ENCODE measurements at regions of chr16 and their contacts with region 1.

Region 1: GRCh38 chr16:31094424-31095120 is at the start of gene VKORC1:
- DNase-seq: peak; percentile 87 to 92 (median 90)
- H3K4me3 ChIP-seq: peak within 1 kb of the TSS; percentile 63 to 98
- H3K4me3 Mint-ChIP-seq: peak within 1 kb of the TSS; percentile 88 to 96 (median 92)
- H3K27ac ChIP-seq: peak within 1 kb of the TSS; percentile 74
- H3K27ac Mint-ChIP-seq: peak within 1 kb of the TSS; percentile 76 to 99 (median 95)
- H3K4me1 ChIP-seq: peaks cover 22% of the 10 kb centered on the region
- H3K4me1 Mint-ChIP-seq: peaks cover 12 to 42% (median 30%) of the 10 kb centered on the region in 4 donors
- H3K27me3 ChIP-seq: no peaks in the 10 kb centered on the region
- H3K27me3 Mint-ChIP-seq: no peaks in the 10 kb centered on the region
- total RNA-seq, gene VKORC1: 48.9 to 51.3 TPM

Region 2: DNA sequence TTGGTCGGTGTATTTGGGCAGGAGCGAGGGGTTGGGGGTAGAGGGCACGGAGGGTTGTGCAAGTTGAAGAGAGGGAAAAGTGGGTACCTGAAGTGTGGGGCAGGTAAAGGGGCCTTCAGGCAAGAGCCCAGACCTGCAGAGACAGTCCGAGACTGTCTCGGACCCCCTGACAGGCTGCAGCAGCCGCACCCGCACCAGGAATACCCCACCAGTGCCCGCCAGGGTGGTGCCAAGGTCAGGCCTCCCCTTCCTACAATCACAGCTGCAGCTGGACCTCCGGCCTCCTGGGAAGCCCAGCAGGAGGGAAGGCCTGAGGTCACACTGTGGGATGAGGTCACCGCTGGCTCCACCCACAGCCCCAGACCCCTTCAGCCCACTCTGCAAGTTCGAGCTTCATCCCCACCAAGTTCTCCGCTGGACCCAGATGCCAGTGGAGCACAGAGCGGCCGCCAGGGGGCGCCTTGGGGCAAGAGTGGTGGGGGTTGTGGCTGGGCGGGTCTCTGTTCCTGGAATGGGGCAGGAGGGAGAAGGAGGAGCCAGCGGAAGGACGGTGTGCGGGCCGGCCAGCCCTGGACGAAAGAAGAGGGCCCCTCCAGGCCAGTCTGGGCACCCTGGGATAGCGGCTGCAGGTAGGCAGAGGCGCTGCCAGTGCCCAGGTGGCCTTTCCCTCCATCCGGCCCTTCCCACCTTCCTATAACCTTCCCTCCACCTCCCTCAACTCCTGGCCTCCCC is 109.7 kb before region 1 on chr16 and contains the start of gene HSD3B7:
- CTCF ChIA-PET with region 1: interaction called, 4 read pairs
- POLR2A ChIA-PET with region 1: interaction called, 3 read pairs
- intact Hi-C with region 1: loop called (anchors 1 kb)
- DNase-seq: peak; percentile 60 to 76 (median 65)
- H3K4me3 ChIP-seq: no peak within 1 kb of the TSS
- H3K4me3 Mint-ChIP-seq: no peak within 1 kb of the TSS
- H3K27ac ChIP-seq: no peak within 1 kb of the TSS
- H3K27ac Mint-ChIP-seq: peak within 1 kb of the TSS in 2 of 7 donors; percentile 63 to 66
- H3K4me1 ChIP-seq: peaks cover 6% of the 10 kb centered on the region
- H3K4me1 Mint-ChIP-seq: peaks cover 0 to 6% (median 0%) of the 10 kb centered on the region in 4 donors
- H3K27me3 ChIP-seq: no peaks in the 10 kb centered on the region
- H3K27me3 Mint-ChIP-seq: no peaks in the 10 kb centered on the region
- total RNA-seq, gene HSD3B7: 3.6 to 4.3 TPM

Region 3: DNA sequence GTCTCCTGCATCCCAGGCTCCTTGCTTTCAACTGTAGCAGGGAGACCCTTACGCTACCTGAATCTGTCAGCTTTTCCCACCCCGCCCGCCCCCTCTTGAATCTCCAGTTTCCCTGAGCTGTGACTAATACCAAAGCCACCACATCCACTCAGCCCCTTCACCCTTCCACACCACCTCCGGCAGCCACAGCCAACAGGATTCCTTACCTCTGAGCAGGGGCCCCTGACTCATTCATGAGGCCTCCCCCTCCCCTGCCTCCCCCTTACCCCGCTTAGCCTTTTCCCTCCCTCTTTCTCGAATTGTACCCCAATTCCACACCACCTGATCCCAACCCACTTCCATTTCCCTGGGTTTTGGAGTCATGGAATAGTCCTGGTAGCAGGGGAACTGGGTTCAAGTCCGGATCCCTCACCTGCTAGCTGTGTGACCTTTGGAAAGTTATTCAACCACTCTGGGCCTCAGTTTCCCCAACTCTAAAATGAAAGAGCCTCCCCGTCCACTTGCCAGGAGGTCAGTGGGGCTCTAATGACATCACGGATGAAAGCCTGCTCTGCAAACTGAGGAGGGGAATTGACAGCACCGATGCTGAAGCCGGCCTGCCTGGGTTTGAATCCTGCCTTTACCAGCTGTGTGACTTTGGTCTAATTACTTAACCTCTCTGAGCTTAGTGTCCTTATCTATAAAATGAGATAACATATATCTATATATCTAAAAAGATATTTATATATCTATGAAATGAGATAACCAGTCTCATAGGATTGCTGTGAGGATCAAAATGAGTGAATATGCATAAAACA is 86.2 kb before region 1 on chr16:
- CTCF ChIA-PET with region 1: no interaction called
- POLR2A ChIA-PET with region 1: no interaction called
- intact Hi-C with region 1: no loop called
- DNase-seq: no peak
- H3K4me3 ChIP-seq: no peak overlapping the region
- H3K4me3 Mint-ChIP-seq: peak overlapping the region in 1 of 8 donors; percentile 27
- H3K27ac ChIP-seq: no peak overlapping the region
- H3K27ac Mint-ChIP-seq: no peak overlapping the region
- H3K4me1 ChIP-seq: peaks cover 7% of the 10 kb centered on the region
- H3K4me1 Mint-ChIP-seq: peaks cover 2 to 22% (median 15%) of the 10 kb centered on the region in 4 donors
- H3K27me3 ChIP-seq: peaks cover 4% of the 10 kb centered on the region
- H3K27me3 Mint-ChIP-seq: peaks cover 6 to 19% of the 10 kb centered on the region in 2 donors

Region 4: GRCh38 chr16:31032736-31033708 is 61.5 kb before region 1 on chr16 and contains the start of gene STX4:
- CTCF ChIA-PET with region 1: no interaction called
- POLR2A ChIA-PET with region 1: interaction called, 5 read pairs
- intact Hi-C with region 1: loop called (anchors 1 kb)
- DNase-seq: peak; percentile 95 to 100 (median 98)
- H3K4me3 ChIP-seq: peak within 1 kb of the TSS; percentile 83 to 97
- H3K4me3 Mint-ChIP-seq: peak within 1 kb of the TSS; percentile 91 to 98 (median 95)
- H3K27ac ChIP-seq: peak within 1 kb of the TSS; percentile 86
- H3K27ac Mint-ChIP-seq: peak within 1 kb of the TSS; percentile 93 to 98 (median 98)
- H3K4me1 ChIP-seq: peaks cover 24% of the 10 kb centered on the region
- H3K4me1 Mint-ChIP-seq: peaks cover 6 to 38% (median 22%) of the 10 kb centered on the region in 4 donors
- H3K27me3 ChIP-seq: no peaks in the 10 kb centered on the region
- H3K27me3 Mint-ChIP-seq: no peaks in the 10 kb centered on the region
- total RNA-seq, gene STX4: 106 to 111 TPM

Region 5: DNA sequence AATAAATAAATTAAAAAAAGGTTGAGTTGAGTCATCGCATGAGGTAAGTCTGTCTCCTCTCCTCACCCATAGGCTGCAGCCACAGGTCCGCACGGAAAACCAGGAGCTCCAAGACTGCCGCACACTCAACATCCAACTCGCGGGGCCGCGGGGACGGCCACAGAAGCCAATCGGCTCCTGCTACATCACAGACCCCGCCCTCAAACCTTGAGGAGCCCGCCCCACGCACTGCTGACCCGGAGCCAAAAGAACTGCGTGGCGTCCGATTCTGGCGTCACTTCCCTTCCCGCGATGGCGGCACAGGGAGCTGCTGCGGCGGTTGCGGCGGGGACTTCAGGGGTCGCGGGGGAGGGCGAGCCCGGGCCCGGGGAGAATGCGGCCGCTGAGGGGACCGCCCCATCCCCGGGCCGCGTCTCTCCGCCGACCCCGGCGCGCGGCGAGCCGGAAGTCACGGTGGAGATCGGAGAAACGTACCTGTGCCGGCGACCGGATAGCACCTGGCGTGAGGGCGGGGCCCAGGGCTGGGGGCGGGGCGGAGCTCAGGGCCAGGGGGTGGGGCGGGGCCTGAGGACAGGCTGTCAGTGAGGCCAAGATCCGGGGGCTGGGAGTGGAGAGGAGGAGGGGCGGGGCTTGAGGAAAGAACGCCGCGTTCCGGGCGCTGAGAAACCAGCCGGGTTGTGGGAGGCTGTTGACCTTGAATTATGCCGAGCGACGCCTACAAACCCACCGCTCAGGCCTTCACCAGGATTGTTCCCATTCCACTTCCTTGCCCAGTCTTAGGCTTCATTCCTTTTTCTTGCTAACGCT is 23.0 kb after region 1 on chr16 and contains the start of gene KAT8:
- CTCF ChIA-PET with region 1: interaction called, 4 read pairs
- POLR2A ChIA-PET with region 1: interaction called, 9 read pairs
- intact Hi-C with region 1: loop called (anchors 1 kb)
- DNase-seq: peak; percentile 98 to 99 (median 98)
- H3K4me3 ChIP-seq: peak within 1 kb of the TSS; percentile 63 to 76
- H3K4me3 Mint-ChIP-seq: peak within 1 kb of the TSS; percentile 83 to 93 (median 89)
- H3K27ac ChIP-seq: peak within 1 kb of the TSS; percentile 89
- H3K27ac Mint-ChIP-seq: peak within 1 kb of the TSS; percentile 80 to 98 (median 95)
- H3K4me1 ChIP-seq: peaks cover 11% of the 10 kb centered on the region
- H3K4me1 Mint-ChIP-seq: peaks cover 9 to 19% (median 13%) of the 10 kb centered on the region in 4 donors
- H3K27me3 ChIP-seq: no peaks in the 10 kb centered on the region
- H3K27me3 Mint-ChIP-seq: no peaks in the 10 kb centered on the region
- total RNA-seq, gene KAT8: 90.8 to 94.2 TPM

Region 6: GRCh38 chr16:31179747-31180459 is 85.3 kb after region 1 on chr16 and contains the start of gene FUS:
- CTCF ChIA-PET with region 1: no interaction called
- POLR2A ChIA-PET with region 1: interaction called, 8 read pairs
- intact Hi-C with region 1: loop called (anchors 5 kb)
- DNase-seq: peak; percentile 89 to 95 (median 94)
- H3K4me3 ChIP-seq: peak within 1 kb of the TSS; percentile 96 to 97
- H3K4me3 Mint-ChIP-seq: peak within 1 kb of the TSS; percentile 97 to 99 (median 98)
- H3K27ac ChIP-seq: peak within 1 kb of the TSS; percentile 89
- H3K27ac Mint-ChIP-seq: peak within 1 kb of the TSS; percentile 95 to 100 (median 99)
- H3K4me1 ChIP-seq: peaks cover 66% of the 10 kb centered on the region
- H3K4me1 Mint-ChIP-seq: peaks cover 41 to 77% (median 54%) of the 10 kb centered on the region in 4 donors
- H3K27me3 ChIP-seq: no peaks in the 10 kb centered on the region
- H3K27me3 Mint-ChIP-seq: no peaks in the 10 kb centered on the region
- total RNA-seq, gene FUS: 500 to 536 TPM